Activated CD8-positive, alpha-beta T cell treated with anti-CD3 and anti-CD28 coated beads for 36 hours (primary cell): ENCODE measurements at regions of chr15 and their contacts with region 1.

Region 1: DNA sequence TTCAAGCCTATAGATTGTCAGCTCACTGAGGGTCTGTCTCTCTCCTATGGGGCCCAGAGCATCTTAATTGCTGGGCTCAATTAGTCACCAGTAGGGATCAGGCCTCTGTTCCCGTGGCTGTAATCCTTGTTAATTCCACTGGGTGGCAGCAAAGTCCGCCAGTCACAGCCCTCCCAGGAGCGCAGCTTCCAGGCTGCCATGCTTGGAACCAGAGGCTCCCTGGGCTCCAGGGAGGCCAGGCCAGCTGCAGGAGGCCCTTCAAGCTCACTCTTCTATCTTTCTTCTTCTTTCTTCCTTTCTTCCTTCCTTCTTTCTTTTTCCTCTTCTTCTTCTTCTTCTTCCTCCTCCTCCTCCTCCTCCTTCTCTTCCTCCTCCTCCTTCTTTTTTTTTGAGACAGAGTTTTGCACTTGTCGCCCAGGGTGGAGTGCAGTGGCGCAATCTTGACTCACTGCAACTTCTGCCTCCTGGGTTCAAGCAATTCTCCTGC is 14.4 kb downstream of the RNU5B-1 start:
- DNase-seq: peak; percentile 84
- ATAC-seq: peak; percentile 100
- H3K4me3 Mint-ChIP-seq: no peak overlapping the region
- H3K27ac Mint-ChIP-seq: no peak overlapping the region
- H3K4me1 Mint-ChIP-seq: no peaks in the 10 kb centered on the region
- H3K27me3 Mint-ChIP-seq: peaks cover 7% of the 10 kb centered on the region
- CTCF ChIP-seq: peak; percentile 89

Region 2: DNA sequence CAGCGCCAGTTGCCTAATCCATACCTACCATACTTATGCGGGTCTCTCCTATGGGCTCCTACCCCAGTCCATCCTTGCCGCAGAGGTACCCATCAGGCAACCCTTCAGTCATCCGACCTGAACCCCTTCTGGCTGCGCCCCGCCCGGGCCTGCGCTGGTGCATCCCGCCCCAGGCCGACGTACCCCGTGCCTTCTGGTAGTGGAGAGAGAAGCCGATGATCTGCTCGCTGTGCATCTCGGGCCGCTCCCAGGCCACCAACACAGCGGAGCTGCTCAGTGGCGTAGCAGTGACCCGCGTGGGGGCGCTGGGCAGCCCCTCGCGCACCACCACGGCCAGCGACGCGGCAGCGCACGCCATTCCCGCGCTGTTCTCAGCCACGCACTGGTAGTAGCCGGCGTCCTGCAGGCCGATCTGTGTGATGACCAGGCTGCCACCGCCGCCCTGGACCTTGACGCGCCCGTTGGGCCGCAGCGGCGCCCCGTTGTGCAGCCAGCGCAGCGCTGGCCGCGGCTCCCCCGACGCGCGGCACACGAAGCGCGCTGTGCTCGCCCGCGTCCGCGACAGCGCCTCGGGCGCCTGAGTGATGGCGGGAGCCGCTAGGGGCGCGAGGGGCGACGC is 76.8 kb after region 1 on chr15:
- CTCF ChIA-PET with region 1: interaction called, 20 read pairs
- POLR2A ChIA-PET with region 1: no interaction called
- intact Hi-C with region 1: no loop called
- DNase-seq: no peak
- ATAC-seq: peak; percentile 55
- H3K4me3 Mint-ChIP-seq: no peak overlapping the region
- H3K27ac Mint-ChIP-seq: no peak overlapping the region
- H3K4me1 Mint-ChIP-seq: peaks cover 5% of the 10 kb centered on the region
- H3K27me3 Mint-ChIP-seq: peaks cover 52% of the 10 kb centered on the region
- CTCF ChIP-seq: peak; percentile 23

Region 3: DNA sequence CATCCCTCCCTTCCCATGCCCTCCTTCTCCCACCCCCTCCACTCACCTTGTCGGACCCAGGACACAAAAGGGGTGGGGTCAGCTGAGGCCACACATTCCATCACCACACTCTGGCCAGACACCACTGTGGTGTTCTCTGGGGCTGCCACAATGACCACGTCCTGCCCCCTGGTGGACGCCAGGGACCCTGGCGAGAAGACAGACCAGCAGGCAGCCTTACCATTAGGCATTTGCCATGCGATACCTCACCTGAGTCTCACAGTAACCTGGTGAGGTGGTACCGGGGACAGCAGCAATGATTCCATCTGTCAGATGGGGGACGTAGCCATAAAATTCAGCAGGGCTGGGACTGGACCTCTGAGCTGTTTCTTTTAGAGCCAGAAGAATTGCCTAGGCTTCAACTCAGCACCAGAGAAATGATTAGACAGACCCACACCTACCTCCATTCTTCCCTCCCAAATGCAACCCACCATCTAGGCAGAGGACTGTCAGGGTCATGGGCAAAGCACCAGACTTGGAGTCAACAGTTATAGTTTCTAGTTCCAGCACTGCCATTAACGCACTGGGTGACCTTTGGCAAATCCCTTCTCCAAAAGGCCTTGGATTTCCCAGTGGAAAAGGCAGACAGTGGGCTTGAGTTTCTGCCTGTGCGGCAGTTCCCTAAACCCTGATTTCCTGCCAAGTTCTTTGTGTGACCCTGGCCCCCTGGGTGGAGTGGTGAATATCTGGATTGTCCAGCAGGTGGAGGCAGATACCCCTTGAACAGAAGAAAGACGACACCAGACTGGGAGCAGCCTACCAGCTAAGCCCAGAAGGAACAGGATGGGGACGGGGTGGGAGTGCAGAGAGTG is 82.1 kb after region 1 on chr15:
- CTCF ChIA-PET with region 1: interaction called, 20 read pairs
- POLR2A ChIA-PET with region 1: no interaction called
- intact Hi-C with region 1: no loop called
- DNase-seq: peak; percentile 68
- ATAC-seq: peak; percentile 82
- H3K4me3 Mint-ChIP-seq: no peak overlapping the region
- H3K27ac Mint-ChIP-seq: no peak overlapping the region
- H3K4me1 Mint-ChIP-seq: peaks cover 5% of the 10 kb centered on the region
- H3K27me3 Mint-ChIP-seq: peaks cover 39% of the 10 kb centered on the region
- CTCF ChIP-seq: peak; percentile 54